Dorsolateral prefrontal cortex (tissue), 120 donors: ENCODE measurements at regions of chr1 and their contacts with region 1.

Region 1: DNA sequence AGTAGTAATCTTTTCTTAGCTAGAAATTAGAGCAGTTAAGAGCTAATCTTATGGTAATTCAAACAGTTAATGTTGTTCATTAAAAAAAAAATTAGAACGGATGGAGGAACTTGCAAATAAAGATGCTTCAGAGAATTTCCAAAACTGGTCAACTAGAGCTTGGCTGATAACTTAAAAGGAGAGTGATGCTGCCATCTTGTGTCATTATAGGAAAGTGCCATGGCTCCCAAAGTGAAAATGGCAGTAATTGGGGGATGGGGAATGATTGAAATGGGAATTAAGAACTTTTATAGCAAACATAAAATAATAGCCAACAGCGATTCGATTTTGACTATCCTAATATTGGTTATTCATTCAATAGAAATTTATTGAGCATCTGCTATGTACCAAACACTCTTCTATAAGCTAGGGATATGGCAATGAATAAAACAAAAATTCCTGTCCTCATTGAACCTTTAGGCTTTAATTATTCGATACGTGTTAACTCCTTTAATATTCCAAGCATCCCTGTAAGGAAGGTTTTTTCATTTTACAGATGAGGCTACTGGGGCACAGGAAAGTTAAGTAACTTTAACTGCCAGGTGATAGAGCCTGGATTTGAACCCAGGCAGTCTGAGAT is 5.7 kb upstream of the PLPP3 start:
- DNase-seq: peak in 1 of 10 donors; percentile 37
- H3K4me3 ChIP-seq: peak overlapping the region in 1 of 59 donors; percentile 6
- H3K27ac ChIP-seq: peak overlapping the region in 16 of 59 donors; percentile 1 to 73 (median 35)
- H3K27me3 ChIP-seq: peaks cover 0 to 9% (median 0%) of the 10 kb centered on the region in 45 donors
- CTCF ChIP-seq: peak; percentile 71 to 99 (median 90)

Region 2: GRCh38 chr1:55140546-55140983 is 1444.5 kb before region 1 on chr1:
- intact Hi-C with region 1: loop called in 1 of 2 experiments (anchors 10 kb)
- DNase-seq: peak in 8 of 10 donors; percentile 43 to 76 (median 58)
- H3K4me3 ChIP-seq: no peak overlapping the region
- H3K27ac ChIP-seq: peak overlapping the region in 13 of 59 donors; percentile 3 to 68 (median 29)
- H3K27me3 ChIP-seq: no peaks in the 10 kb centered on the region
- CTCF ChIP-seq: peak; percentile 69 to 97 (median 86)

Region 3: GRCh38 chr1:55284852-55285251 is 1300.2 kb before region 1 on chr1:
- intact Hi-C with region 1: loop called (anchors 2 to 5 kb)
- DNase-seq: peak in 2 of 10 donors; percentile 23 to 30
- H3K4me3 ChIP-seq: peak overlapping the region in 1 of 59 donors; percentile 7
- H3K27ac ChIP-seq: peak overlapping the region in 1 of 59 donors; percentile 53
- H3K27me3 ChIP-seq: peaks cover 0 to 10% (median 0%) of the 10 kb centered on the region in 45 donors
- CTCF ChIP-seq: peak in 54 of 56 donors; percentile 48 to 91 (median 71)

Region 4: GRCh38 chr1:56064705-56065104 is 520.3 kb before region 1 on chr1:
- intact Hi-C with region 1: loop called (anchors 2 to 5 kb)
- DNase-seq: no peak
- H3K4me3 ChIP-seq: no peak overlapping the region
- H3K27ac ChIP-seq: no peak overlapping the region
- H3K27me3 ChIP-seq: no peaks in the 10 kb centered on the region
- CTCF ChIP-seq: no peak

Region 5: DNA sequence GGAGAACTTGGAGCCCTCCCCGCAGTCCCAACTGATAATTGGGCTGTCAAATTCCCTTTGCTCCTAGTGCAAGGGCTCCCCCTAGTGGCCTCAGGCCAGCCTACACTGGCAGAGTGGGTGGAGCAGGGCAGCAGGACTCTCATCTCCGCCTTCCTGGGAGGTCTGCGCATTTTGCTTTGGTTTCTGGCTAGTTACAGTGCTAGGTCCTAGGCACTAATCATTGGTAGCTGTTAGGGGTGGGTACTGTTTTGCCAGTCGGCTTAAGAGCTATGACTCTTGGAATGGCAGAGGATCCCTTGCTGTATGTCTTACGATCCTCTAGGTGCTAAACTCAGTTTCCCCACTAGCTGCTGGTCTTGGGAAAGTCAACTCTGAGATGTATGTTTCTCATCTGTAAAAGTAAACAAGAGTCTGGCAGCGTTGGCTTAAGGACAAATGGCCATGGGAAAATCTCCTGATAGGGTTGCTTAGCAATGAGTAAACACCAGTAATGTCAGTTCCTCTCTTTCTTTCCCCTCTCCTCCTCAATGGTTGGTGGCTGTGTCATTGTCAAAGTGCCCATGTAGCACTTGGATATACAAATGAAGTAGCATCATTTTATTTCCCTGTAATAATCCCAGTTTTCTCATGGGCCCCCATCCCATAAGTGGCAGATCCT is 236.2 kb after region 1 on chr1:
- intact Hi-C with region 1: loop called in 1 of 2 experiments (anchors 10 kb)
- DNase-seq: peak; percentile 56 to 79 (median 73)
- H3K4me3 ChIP-seq: no peak overlapping the region
- H3K27ac ChIP-seq: no peak overlapping the region
- H3K27me3 ChIP-seq: peaks cover 0 to 7% (median 0%) of the 10 kb centered on the region in 45 donors
- CTCF ChIP-seq: peak; percentile 54 to 96 (median 88)